ENCODE measurements at regions of chr12 and their contacts with region 1.

Region 1: DNA sequence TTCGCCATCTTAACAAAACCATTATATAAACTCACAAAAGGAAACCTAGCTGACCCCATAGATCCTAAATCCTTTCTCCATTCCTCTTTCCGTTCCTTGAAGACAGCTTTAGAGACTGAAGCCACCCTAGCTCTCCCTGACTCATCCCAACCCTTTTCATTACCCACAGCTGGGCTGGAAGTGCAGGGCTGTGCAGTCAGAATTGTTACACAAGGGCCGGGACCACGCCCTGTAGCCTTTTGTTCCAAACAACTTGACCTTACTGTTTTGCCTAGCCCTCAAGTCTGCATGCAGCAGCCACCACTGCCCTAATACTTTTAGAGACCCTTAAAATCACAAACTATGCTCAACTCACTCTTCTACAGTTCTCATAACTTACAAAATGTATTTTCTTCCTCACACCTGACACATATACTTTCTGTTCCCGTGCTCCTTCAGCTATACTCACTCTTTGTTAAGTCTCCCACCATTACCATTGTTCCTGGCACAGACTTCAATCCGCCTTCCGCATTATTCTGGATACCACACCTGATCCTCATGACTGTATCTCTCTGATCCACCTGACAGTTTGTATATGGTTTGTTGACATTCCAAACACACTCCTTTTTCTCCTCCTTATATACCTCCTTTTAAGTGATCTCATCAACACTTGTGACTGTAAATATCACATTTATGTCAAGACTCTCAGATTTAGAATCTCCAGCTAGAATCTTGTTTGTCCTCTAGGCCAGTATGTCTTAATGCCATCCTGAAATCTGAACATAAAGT is 208.7 kb downstream of the KITLG start:
- DNase-seq: peak; percentile 89
- H3K4me3 Mint-ChIP-seq: no peak overlapping the region
- H3K27ac Mint-ChIP-seq: no peak overlapping the region
- H3K4me1 Mint-ChIP-seq: no peaks in the 10 kb centered on the region
- H3K27me3 Mint-ChIP-seq: no peaks in the 10 kb centered on the region
- CTCF ChIP-seq: no peak

Region 2: DNA sequence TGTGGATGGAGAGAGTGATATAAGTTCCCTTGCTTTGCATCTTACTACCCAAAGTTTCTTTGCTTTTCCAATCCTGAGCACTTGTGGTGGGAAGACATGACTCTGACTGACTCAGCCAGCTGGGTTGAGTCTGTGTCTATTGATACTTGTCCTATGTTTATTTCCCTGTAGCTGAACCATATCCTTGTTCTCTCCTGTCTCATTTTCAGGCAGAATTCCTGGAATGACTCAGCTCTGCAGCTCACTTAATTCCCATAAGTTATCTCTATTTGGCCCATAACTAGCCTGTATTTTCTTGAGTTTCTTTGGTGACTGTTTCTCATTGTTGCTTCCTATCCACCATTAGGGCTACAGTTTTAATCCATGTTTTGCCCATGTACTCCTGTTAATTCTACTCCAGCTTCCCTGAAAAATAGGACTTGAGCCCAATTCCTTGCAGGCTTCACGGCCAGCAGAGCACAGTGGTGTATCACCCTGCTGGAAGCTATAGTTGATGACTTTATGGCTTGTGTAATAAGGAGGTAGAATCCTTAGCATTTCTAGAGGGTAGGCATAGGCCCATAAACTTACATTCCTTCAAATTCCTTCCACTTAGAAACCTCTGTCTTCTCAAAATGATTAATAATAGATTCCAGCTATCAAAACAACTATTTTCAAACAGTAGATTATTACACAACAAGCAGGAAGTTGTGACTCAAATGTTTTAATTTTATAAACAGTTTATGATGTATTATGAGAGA is 46.4 kb before region 1 on chr12:
- CTCF ChIA-PET with region 1: no interaction called
- POLR2A ChIA-PET with region 1: interaction called, 3 read pairs
- intact Hi-C with region 1: loop called (anchors 10 kb)
- DNase-seq: peak; percentile 77
- H3K4me3 Mint-ChIP-seq: peak overlapping the region; percentile 22
- H3K27ac Mint-ChIP-seq: peak overlapping the region; percentile 93
- H3K4me1 Mint-ChIP-seq: peaks cover 11% of the 10 kb centered on the region
- H3K27me3 Mint-ChIP-seq: no peaks in the 10 kb centered on the region
- CTCF ChIP-seq: no peak